B cell (primary cell): ENCODE measurements at regions of chr19 and their contacts with region 1.

Region 1: DNA sequence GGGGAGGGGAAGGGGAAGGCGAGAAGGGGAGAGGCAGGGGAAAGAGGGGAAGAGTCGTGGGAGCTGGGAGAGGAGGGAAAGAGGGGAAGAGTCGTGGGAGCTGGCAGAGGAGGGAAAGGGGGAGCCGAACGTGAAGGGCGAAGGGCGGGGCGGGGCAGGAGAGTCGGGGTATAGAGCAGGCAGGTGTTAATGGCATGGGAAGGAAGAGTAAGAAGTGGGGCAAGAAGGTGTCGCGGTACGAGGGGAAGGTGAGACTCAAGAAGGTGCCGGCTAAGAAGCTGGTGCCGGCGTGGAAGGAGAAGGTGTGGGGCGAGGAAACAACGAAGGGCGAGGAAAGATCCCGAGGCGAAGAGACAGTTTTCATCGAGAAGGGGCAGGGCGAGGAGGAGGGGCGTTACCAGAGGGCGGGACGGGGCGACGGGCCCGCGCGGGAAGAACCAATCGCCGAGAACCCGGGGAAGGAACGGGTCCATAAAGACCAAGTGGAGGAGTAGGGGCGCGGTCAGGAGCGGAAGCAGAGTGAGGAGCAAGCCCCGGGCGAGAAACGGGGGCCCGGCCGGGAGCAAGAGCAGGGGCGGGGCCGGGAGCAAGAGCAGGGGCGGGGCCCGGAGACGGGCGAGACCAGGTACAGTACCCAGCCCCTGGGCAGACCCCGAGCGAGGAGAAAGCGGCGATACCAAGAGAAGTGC is 463 bp downstream of the CATSPERG start:
- DNase-seq: peak; percentile 96
- ATAC-seq: peak; percentile 64
- H3K4me3 ChIP-seq: peak overlapping the region; percentile 52 to 85 (median 80)
- H3K4me3 Mint-ChIP-seq: peak overlapping the region; percentile 97
- H3K27ac ChIP-seq: peak overlapping the region; percentile 89 to 95
- H3K27ac Mint-ChIP-seq: peak overlapping the region; percentile 97
- H3K4me1 ChIP-seq: peaks cover 5 to 11% of the 10 kb centered on the region in 2 donors
- H3K4me1 Mint-ChIP-seq: peaks cover 13% of the 10 kb centered on the region
- H3K27me3 ChIP-seq: no peaks in the 10 kb centered on the region
- H3K27me3 Mint-ChIP-seq: no peaks in the 10 kb centered on the region
- CTCF ChIP-seq: no peak

Region 2: GRCh38 chr19:37719111-37719926 is 616.8 kb before region 1 on chr19 and contains the start of gene ZNF607:
- CTCF ChIA-PET with region 1: no interaction called
- POLR2A ChIA-PET with region 1: no interaction called
- intact Hi-C with region 1: loop called (anchors 10 kb)
- DNase-seq: peak; percentile 94
- ATAC-seq: peak; percentile 95
- H3K4me3 ChIP-seq: peak within 1 kb of the TSS; percentile 51 to 86 (median 82)
- H3K4me3 Mint-ChIP-seq: peak within 1 kb of the TSS; percentile 90
- H3K27ac ChIP-seq: peak within 1 kb of the TSS; percentile 62 to 68
- H3K27ac Mint-ChIP-seq: peak within 1 kb of the TSS; percentile 89
- H3K4me1 ChIP-seq: peaks cover 7 to 12% of the 10 kb centered on the region in 2 donors
- H3K4me1 Mint-ChIP-seq: peaks cover 14% of the 10 kb centered on the region
- H3K27me3 ChIP-seq: no peaks in the 10 kb centered on the region
- H3K27me3 Mint-ChIP-seq: no peaks in the 10 kb centered on the region
- CTCF ChIP-seq: peak; percentile 52
- total RNA-seq, gene ZNF607: 19.4 and 21.5 TPM in 2 replicates

Region 3: GRCh38 chr19:38107129-38107528 is 229.0 kb before region 1 on chr19:
- CTCF ChIA-PET with region 1: no interaction called
- POLR2A ChIA-PET with region 1: no interaction called
- intact Hi-C with region 1: no loop called
- DNase-seq: no peak
- ATAC-seq: no peak
- H3K4me3 ChIP-seq: no peak overlapping the region
- H3K4me3 Mint-ChIP-seq: no peak overlapping the region
- H3K27ac ChIP-seq: no peak overlapping the region
- H3K27ac Mint-ChIP-seq: no peak overlapping the region
- H3K4me1 ChIP-seq: no peaks in the 10 kb centered on the region
- H3K4me1 Mint-ChIP-seq: peaks cover 3% of the 10 kb centered on the region
- H3K27me3 ChIP-seq: no peaks in the 10 kb centered on the region
- H3K27me3 Mint-ChIP-seq: no peaks in the 10 kb centered on the region
- CTCF ChIP-seq: no peak

Region 4: GRCh38 chr19:38229585-38230073 is 106.5 kb before region 1 on chr19:
- CTCF ChIA-PET with region 1: interaction called, 22 read pairs
- POLR2A ChIA-PET with region 1: interaction called, 3 read pairs
- intact Hi-C with region 1: loop called (anchors 1 kb)
- DNase-seq: peak; percentile 79
- ATAC-seq: peak; percentile 90
- H3K4me3 ChIP-seq: no peak overlapping the region
- H3K4me3 Mint-ChIP-seq: peak overlapping the region; percentile 64
- H3K27ac ChIP-seq: no peak overlapping the region
- H3K27ac Mint-ChIP-seq: peak overlapping the region; percentile 56
- H3K4me1 ChIP-seq: peaks cover 23% of the 10 kb centered on the region in 2 donors
- H3K4me1 Mint-ChIP-seq: peaks cover 22% of the 10 kb centered on the region
- H3K27me3 ChIP-seq: peaks cover 0 to 83% (median 33%) of the 10 kb centered on the region in 4 experiments
- H3K27me3 Mint-ChIP-seq: peaks cover 37% of the 10 kb centered on the region
- CTCF ChIP-seq: no peak

Region 5: DNA sequence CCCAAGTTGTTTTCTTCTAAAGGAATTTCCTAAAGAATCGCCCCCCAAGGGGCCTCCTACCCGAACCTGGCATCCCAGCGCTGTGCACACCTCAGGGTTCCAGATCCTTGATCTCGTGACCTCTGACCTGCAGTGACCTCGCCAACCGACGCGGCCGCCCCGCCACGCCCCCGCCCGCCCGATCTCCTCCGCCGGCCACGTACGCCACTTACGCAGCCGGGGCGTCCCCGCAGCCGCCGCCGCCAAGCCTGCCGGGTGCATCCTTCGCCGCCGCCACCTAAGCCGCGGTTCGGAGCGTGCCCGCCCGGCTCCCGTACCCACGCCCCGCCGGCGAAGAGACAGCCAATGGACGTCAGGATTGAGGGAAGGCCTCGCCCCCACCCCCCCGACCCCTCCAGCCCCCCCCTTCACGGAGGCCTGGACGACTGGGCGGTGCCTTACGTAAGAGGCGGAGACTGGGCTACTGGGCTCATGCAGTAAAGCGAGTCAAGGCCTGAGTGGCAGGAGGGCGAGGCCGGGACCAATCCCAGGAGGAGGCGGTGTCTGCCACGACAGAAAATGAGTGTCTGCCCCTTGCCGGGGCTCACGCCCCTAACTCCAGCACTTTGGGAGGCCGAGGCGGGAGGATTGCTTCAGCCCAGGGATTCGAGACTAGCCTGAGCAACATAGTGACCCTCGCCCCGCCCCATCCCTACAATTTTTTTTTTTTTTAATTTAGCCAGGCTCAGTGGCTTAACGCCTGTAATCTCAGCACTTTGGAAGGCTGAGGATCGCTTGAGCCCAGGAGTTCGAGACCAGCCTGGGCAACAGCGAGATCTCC is 20.2 kb before region 1 on chr19 and contains the start of gene YIF1B:
- CTCF ChIA-PET with region 1: no interaction called
- POLR2A ChIA-PET with region 1: interaction called, 3 read pairs
- intact Hi-C with region 1: loop called (anchors 1 kb)
- DNase-seq: peak; percentile 96
- ATAC-seq: peak; percentile 91
- H3K4me3 ChIP-seq: peak within 1 kb of the TSS; percentile 62 to 90 (median 70)
- H3K4me3 Mint-ChIP-seq: peak within 1 kb of the TSS; percentile 96
- H3K27ac ChIP-seq: peak within 1 kb of the TSS; percentile 85 to 91
- H3K27ac Mint-ChIP-seq: peak within 1 kb of the TSS; percentile 96
- H3K4me1 ChIP-seq: peaks cover 29 to 47% of the 10 kb centered on the region in 2 donors
- H3K4me1 Mint-ChIP-seq: peaks cover 47% of the 10 kb centered on the region
- H3K27me3 ChIP-seq: peaks cover 0 to 2% (median 0%) of the 10 kb centered on the region in 4 experiments
- H3K27me3 Mint-ChIP-seq: no peaks in the 10 kb centered on the region
- CTCF ChIP-seq: no peak
- total RNA-seq, gene YIF1B: 30.6 and 31.6 TPM in 2 replicates

Region 6: GRCh38 chr19:38387550-38388348 is 51.7 kb after region 1 on chr19 and contains the start of gene GGN:
- CTCF ChIA-PET with region 1: interaction called, 4 read pairs
- POLR2A ChIA-PET with region 1: no interaction called
- intact Hi-C with region 1: loop called (anchors 1 kb)
- DNase-seq: peak; percentile 84
- ATAC-seq: peak; percentile 65
- H3K4me3 ChIP-seq: peak within 1 kb of the TSS; percentile 11 to 77 (median 41)
- H3K4me3 Mint-ChIP-seq: peak within 1 kb of the TSS; percentile 97
- H3K27ac ChIP-seq: no peak within 1 kb of the TSS
- H3K27ac Mint-ChIP-seq: peak within 1 kb of the TSS; percentile 75
- H3K4me1 ChIP-seq: peaks cover 36% of the 10 kb centered on the region in 2 donors
- H3K4me1 Mint-ChIP-seq: peaks cover 31% of the 10 kb centered on the region
- H3K27me3 ChIP-seq: peaks cover 0 to 49% (median 21%) of the 10 kb centered on the region in 4 experiments
- H3K27me3 Mint-ChIP-seq: peaks cover 27% of the 10 kb centered on the region
- CTCF ChIP-seq: no peak
- total RNA-seq, gene GGN: 0.34 TPM in 2 replicates

Region 7: GRCh38 chr19:38583219-38583984 is 247.3 kb after region 1 on chr19:
- CTCF ChIA-PET with region 1: no interaction called
- POLR2A ChIA-PET with region 1: no interaction called
- intact Hi-C with region 1: no loop called
- DNase-seq: peak; percentile 46
- ATAC-seq: peak; percentile 66
- H3K4me3 ChIP-seq: no peak overlapping the region
- H3K4me3 Mint-ChIP-seq: peak overlapping the region; percentile 33
- H3K27ac ChIP-seq: peak overlapping the region; percentile 12 to 30
- H3K27ac Mint-ChIP-seq: peak overlapping the region; percentile 83
- H3K4me1 ChIP-seq: peaks cover 6 to 16% of the 10 kb centered on the region in 2 donors
- H3K4me1 Mint-ChIP-seq: peaks cover 17% of the 10 kb centered on the region
- H3K27me3 ChIP-seq: no peaks in the 10 kb centered on the region
- H3K27me3 Mint-ChIP-seq: no peaks in the 10 kb centered on the region
- CTCF ChIP-seq: no peak